ENCODE measurements at regions of chr4 and their contacts with region 1.

Region 1: GRCh38 chr4:85474818-85475630 is at the start of gene ARHGAP24:
- DNase-seq: peak; percentile 99
- H3K4me3 Mint-ChIP-seq: peak within 1 kb of the TSS; percentile 88
- H3K27ac Mint-ChIP-seq: peak within 1 kb of the TSS; percentile 81
- H3K4me1 Mint-ChIP-seq: peaks cover 18% of the 10 kb centered on the region
- H3K27me3 Mint-ChIP-seq: no peaks in the 10 kb centered on the region
- CTCF ChIP-seq: no peak
- total RNA-seq, gene ARHGAP24: 2.6 and 3.2 TPM in 2 replicates

Region 2: GRCh38 chr4:85127653-85128052 is 347.4 kb before region 1 on chr4:
- CTCF ChIA-PET with region 1: no interaction called
- POLR2A ChIA-PET with region 1: no interaction called
- intact Hi-C with region 1: no loop called
- DNase-seq: peak; percentile 35
- H3K4me3 Mint-ChIP-seq: no peak overlapping the region
- H3K27ac Mint-ChIP-seq: no peak overlapping the region
- H3K4me1 Mint-ChIP-seq: no peaks in the 10 kb centered on the region
- H3K27me3 Mint-ChIP-seq: no peaks in the 10 kb centered on the region
- CTCF ChIP-seq: peak; percentile 29

Region 3: GRCh38 chr4:85489273-85490265 is 14.5 kb after region 1 on chr4:
- CTCF ChIA-PET with region 1: interaction called, 3 read pairs
- POLR2A ChIA-PET with region 1: interaction called, 22 read pairs
- intact Hi-C with region 1: no loop called
- DNase-seq: peak; percentile 58
- H3K4me3 Mint-ChIP-seq: no peak overlapping the region
- H3K27ac Mint-ChIP-seq: no peak overlapping the region
- H3K4me1 Mint-ChIP-seq: peaks cover 19% of the 10 kb centered on the region
- H3K27me3 Mint-ChIP-seq: no peaks in the 10 kb centered on the region
- CTCF ChIP-seq: no peak

Region 4: DNA sequence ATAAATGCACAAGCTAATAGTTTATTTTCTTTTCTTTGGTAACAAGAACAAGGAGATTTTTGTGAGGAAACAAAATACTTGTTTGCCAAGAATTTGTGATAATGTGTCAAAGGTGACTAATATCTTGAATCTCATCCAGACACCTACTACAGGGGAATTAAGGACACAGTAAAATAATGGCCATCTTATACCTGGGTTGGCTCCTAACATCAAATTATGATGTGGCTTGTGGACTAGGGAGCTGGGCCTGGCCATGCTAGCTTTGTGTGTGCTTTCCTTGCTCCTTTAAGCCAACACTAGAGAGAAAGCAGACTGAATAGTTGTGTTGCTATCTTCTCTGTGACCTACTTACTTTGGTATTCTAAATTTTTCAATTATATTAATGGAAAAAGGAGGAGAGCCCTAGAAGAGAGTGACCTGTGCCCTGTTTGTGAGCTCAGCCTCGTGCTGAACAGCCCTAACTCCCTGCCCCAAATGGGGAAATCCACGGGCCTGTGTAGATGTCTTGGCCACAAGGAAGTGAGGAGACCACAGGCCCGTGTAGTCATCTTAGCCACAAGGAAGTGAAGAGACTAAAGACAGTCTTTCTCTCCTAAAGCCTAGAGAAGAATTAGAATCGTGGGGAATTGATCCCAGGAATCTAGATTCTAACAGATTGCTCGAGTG is 23.2 kb after region 1 on chr4:
- CTCF ChIA-PET with region 1: interaction called, 15 read pairs
- POLR2A ChIA-PET with region 1: interaction called, 37 read pairs
- intact Hi-C with region 1: no loop called
- DNase-seq: peak; percentile 61
- H3K4me3 Mint-ChIP-seq: no peak overlapping the region
- H3K27ac Mint-ChIP-seq: peak overlapping the region; percentile 87
- H3K4me1 Mint-ChIP-seq: peaks cover 34% of the 10 kb centered on the region
- H3K27me3 Mint-ChIP-seq: no peaks in the 10 kb centered on the region
- CTCF ChIP-seq: no peak